ENCODE measurements at regions of chr19 and their contacts with region 1.

Region 1: DNA sequence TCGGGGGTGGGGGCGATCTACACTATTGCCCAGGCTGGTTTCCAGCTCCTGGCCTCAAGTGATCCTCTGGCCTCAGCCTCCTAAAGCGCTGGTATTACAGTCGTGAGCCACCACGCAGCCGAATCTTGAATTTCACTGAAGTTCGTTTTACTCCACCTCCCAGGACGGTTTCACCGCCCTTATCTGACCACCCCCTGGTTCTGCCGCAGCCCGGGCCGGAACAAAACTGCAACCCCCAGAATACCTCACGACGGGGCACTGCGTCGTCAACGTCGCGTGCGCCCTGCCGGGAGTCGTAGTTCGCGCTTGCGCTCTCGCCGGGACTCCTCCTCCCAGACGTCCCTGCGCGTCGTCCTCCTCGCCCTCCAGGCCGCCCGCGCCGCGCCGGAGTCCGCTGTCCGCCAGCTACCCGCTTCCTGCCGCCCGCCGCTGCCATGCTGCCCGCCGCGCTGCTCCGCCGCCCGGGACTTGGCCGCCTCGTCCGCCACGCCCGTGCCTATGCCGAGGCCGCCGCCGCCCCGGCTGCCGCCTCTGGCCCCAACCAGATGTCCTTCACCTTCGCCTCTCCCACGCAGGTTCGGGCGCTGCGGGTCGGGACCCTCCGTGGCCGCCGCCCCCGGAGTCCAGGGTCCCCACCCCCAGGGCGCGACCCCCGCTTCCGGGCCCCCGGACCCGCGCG is at the start of gene ATP5F1D:
- DNase-seq: peak; percentile 91
- H3K4me3 ChIP-seq: peak within 1 kb of the TSS; percentile 74 to 76 (median 74)
- H3K27ac ChIP-seq: peak within 1 kb of the TSS; percentile 27
- H3K4me1 ChIP-seq: peaks cover 45% of the 10 kb centered on the region
- H3K27me3 ChIP-seq: no peaks in the 10 kb centered on the region
- CTCF ChIP-seq: no peak
- total RNA-seq, gene ATP5F1D: 12.3 to 198 TPM

Region 2: GRCh38 chr19:771332-771785 is 470.2 kb before region 1 on chr19:
- CTCF ChIA-PET with region 1: no interaction called
- dilution Hi-C with region 1: no loop called
- in situ Hi-C with region 1: no loop called
- intact Hi-C with region 1: loop called (anchors 2 kb)
- DNase-seq: peak; percentile 28
- H3K4me3 ChIP-seq: no peak overlapping the region
- H3K27ac ChIP-seq: no peak overlapping the region
- H3K4me1 ChIP-seq: no peaks in the 10 kb centered on the region
- H3K27me3 ChIP-seq: no peaks in the 10 kb centered on the region
- CTCF ChIP-seq: peak; percentile 47 to 66

Region 3: DNA sequence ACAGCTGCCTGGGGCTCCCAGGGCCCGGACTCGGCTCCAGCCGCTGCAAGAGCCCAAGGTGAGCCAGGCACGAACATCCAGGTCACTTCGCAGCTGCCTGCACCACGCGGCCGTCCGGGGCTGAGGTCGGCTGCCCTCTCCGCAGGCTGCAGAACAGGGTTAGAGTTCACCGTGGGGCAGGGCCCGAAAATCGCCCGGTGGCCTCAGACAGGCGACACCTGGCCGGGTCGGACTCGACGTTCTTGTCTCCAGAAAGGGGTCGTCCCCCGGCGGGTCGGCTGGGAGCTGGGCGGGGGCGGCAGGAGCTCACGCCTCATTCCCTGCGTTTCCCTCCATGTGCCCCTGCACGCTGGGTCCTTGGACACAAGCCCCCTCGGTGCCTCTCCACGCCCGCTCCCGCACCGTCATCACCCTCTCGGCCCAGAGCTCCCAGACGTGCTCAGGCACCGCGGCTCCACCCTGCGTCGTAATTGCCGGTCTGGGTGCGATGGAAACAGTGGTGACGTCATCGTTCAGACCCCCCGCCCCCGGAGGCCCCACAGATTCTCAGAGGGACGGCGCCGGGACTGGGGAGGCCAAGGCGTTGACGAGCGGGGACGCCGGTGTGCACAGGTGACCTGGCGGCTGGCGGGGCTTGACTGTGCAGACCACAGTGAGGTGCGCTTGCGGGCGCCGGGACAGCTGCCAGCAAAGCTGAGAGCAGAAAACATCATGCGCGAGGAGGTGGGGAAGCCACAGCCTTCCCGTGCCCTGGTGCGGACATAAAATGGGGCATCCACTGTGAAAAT is 245.3 kb before region 1 on chr19:
- CTCF ChIA-PET with region 1: interaction called, 9 read pairs
- dilution Hi-C with region 1: no loop called
- in situ Hi-C with region 1: no loop called
- intact Hi-C with region 1: loop called (anchors 5 kb)
- DNase-seq: peak; percentile 58
- H3K4me3 ChIP-seq: peak overlapping the region in 1 of 3 experiments; percentile 28
- H3K27ac ChIP-seq: no peak overlapping the region
- H3K4me1 ChIP-seq: peaks cover 16% of the 10 kb centered on the region
- H3K27me3 ChIP-seq: peaks cover 2% of the 10 kb centered on the region
- CTCF ChIP-seq: no peak

Region 4: DNA sequence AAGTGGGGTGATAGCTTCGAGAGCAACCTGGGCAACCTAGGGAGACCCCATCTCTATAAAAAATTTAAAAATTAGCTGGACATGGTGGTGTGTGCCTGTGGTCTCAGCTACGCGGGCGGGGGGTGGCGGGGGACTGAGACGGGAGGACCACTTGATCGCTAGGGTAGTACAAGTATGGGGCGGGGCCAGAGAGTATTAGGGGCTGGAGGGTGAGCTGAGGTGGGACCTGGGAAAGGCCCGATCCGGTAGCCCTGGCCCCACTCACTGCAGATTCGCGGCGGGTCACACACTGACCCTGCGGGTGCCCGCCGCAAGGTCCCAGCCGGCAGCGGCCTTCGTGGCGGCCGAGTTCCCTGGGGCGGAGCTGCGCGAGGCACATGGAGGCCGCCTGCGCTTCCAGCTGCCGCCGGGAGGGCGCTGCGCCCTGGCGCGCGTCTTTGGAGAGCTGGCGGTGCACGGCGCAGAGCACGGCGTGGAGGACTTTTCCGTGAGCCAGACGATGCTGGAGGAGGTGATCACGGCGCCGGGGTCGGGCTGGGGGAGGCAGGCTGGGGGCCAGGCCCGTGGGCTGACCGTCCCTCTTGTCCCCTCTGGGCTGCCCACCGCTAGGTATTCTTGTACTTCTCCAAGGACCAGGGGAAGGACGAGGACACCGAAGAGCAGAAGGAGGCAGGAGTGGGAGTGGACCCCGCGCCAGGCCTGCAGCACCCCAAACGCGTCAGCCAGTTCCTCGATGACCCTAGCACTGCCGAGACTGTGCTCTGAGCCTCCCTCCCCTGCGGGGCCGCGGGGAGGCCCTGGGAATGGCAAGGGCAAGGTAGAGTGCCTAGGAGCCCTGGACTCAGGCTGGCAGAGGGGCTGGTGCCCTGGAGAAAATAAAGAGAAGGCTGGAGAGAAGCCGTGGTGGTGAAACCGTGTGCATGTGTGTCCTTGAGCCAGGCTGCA is 176.6 kb before region 1 on chr19:
- CTCF ChIA-PET with region 1: no interaction called
- dilution Hi-C with region 1: loop called (anchors 10 kb)
- in situ Hi-C with region 1: no loop called
- intact Hi-C with region 1: no loop called
- DNase-seq: peak; percentile 52
- H3K4me3 ChIP-seq: no peak overlapping the region
- H3K27ac ChIP-seq: no peak overlapping the region
- H3K4me1 ChIP-seq: peaks cover 30% of the 10 kb centered on the region
- H3K27me3 ChIP-seq: no peaks in the 10 kb centered on the region
- CTCF ChIP-seq: peak; percentile 55 to 71

Region 5: DNA sequence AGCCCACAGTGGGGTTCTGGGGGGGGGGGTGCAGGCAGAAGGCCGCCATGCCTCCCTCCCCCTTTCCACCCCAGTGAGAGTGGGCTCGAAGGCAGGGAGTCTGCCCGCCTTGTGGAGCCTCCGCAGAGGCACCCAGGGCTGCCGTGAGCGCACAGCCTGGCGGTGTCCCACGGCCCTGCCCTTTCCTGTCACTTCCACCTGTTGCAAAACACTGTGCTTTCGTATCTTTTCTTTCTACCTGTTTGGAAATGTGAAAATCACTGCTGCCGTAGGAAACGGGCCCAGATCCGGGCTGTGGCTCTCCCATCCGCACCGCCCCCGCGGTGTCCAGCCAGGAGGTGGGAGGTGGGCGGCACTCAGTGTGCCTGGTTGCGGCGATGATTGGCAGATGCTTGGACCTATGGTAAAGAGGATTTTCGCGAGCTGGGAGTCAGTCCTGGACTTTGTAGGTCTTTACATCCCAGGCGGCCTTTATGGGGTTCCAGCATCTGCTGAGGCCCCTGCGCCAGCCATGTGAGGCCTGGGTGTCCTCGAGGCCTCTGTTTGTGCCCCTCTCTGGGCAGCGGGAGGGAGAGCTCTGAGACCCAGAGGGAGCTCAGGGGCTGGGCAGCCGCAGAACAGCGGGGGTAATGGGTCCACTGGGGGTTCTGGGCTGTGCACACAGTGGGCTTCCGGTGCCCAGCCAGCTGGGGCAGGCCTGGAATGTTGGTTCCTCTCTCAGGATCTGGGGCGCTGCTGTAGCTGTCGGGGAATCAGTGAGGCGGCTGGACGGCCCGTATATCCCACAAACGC is 29.9 kb before region 1 on chr19:
- CTCF ChIA-PET with region 1: no interaction called
- dilution Hi-C with region 1: no loop called
- in situ Hi-C with region 1: no loop called
- intact Hi-C with region 1: loop called (anchors 2 kb)
- DNase-seq: peak; percentile 57
- H3K4me3 ChIP-seq: no peak overlapping the region
- H3K27ac ChIP-seq: no peak overlapping the region
- H3K4me1 ChIP-seq: peaks cover 66% of the 10 kb centered on the region
- H3K27me3 ChIP-seq: no peaks in the 10 kb centered on the region
- CTCF ChIP-seq: no peak

Region 6: GRCh38 chr19:1373534-1374249 is 132.1 kb after region 1 on chr19:
- CTCF ChIA-PET with region 1: interaction called, 10 read pairs
- dilution Hi-C with region 1: no loop called
- in situ Hi-C with region 1: no loop called
- intact Hi-C with region 1: no loop called
- DNase-seq: no peak
- H3K4me3 ChIP-seq: no peak overlapping the region
- H3K27ac ChIP-seq: no peak overlapping the region
- H3K4me1 ChIP-seq: no peaks in the 10 kb centered on the region
- H3K27me3 ChIP-seq: no peaks in the 10 kb centered on the region
- CTCF ChIP-seq: no peak

Region 7: GRCh38 chr19:1406774-1407499 is 165.4 kb after region 1 on chr19:
- CTCF ChIA-PET with region 1: no interaction called
- dilution Hi-C with region 1: no loop called
- in situ Hi-C with region 1: no loop called
- intact Hi-C with region 1: no loop called
- DNase-seq: peak; percentile 98
- H3K4me3 ChIP-seq: peak overlapping the region; percentile 56 to 71 (median 65)
- H3K27ac ChIP-seq: peak overlapping the region; percentile 25
- H3K4me1 ChIP-seq: peaks cover 50% of the 10 kb centered on the region
- H3K27me3 ChIP-seq: no peaks in the 10 kb centered on the region
- CTCF ChIP-seq: peak; percentile 37 to 63

Measured in mammary epithelial cell (primary cell).